Panc1 (cell line): ENCODE measurements at regions of chr11 and their contacts with region 1.

Region 1: DNA sequence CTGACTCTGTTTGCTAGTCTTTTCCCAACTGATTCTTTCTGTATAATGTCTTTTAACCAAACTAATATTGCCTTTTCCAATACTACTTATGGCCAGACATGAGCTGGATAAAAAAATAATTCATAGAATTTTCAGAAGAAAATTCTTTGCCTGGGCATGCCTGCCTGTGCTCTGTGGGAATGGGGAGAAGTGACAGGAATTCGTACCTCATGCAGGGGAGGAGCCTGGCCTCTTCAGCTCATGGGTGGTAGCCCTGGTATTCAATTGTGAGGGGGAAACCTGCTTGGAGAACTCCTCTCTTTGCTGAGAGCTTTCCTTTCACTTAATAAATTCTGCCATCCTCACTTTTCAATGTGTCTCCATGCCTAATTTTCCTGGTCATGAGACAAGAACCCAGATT is 928.8 kb downstream of the FAM181B start:
- DNase-seq: no peak
- ATAC-seq: no peak
- H3K4me3 ChIP-seq: no peak overlapping the region
- H3K27ac ChIP-seq: no peak overlapping the region
- H3K4me1 ChIP-seq: no peaks in the 10 kb centered on the region
- H3K27me3 ChIP-seq: no peaks in the 10 kb centered on the region
- CTCF ChIP-seq: no peak

Region 2: DNA sequence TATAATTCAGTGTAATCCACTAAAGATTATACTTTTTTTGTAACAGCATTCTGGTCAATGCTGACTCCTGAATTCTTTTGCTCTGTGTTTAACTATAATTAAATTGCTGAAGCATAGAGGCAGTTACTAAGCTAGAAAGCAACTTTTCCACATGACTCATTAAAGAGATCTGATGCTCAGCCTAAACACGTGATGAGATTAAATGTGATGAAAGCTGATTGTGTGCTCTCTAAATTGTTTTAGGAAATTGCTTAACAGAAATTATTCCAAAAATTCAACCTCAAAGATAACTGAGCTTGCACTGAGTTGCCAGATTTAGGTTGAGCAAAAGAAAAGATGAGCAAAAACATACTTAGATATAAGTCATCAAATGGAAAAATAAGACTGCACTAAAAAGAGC is 104.8 kb before region 1 on chr11:
- CTCF ChIA-PET with region 1: no interaction called
- POLR2A ChIA-PET with region 1: no interaction called
- in situ Hi-C with region 1: no loop called
- intact Hi-C with region 1: no loop called
- DNase-seq: no peak
- ATAC-seq: no peak
- H3K4me3 ChIP-seq: no peak overlapping the region
- H3K27ac ChIP-seq: no peak overlapping the region
- H3K4me1 ChIP-seq: no peaks in the 10 kb centered on the region
- H3K27me3 ChIP-seq: no peaks in the 10 kb centered on the region
- CTCF ChIP-seq: no peak

Region 3: DNA sequence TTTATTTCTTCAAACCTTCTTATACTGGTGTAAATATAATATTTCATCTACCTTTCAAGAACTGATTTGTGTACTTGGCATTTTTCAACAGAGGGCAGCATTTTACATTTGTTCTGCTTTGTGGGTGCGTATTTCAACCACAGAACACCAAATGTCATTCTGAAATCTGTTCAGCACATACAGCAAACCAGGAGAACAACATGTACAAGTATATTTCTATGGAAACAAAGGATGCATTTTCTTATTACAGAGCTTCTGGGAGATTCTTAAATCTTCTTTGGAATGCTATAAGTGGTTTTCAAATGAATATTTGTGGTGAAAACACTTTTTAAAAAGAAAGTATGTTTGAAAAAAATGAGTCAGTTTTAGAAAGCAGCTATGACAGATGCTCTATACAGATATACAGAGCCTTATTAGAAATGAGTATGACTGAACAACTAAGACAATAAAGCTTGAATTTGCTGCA is 17.2 kb before region 1 on chr11:
- CTCF ChIA-PET with region 1: no interaction called
- POLR2A ChIA-PET with region 1: no interaction called
- in situ Hi-C with region 1: no loop called
- intact Hi-C with region 1: loop called (anchors 1 kb)
- DNase-seq: no peak
- ATAC-seq: no peak
- H3K4me3 ChIP-seq: no peak overlapping the region
- H3K27ac ChIP-seq: no peak overlapping the region
- H3K4me1 ChIP-seq: no peaks in the 10 kb centered on the region
- H3K27me3 ChIP-seq: no peaks in the 10 kb centered on the region
- CTCF ChIP-seq: peak; percentile 12; the same call in 1 of the 2 replicates